ENCODE measurements at regions of chr5 and their contacts with region 1.

Region 1: DNA sequence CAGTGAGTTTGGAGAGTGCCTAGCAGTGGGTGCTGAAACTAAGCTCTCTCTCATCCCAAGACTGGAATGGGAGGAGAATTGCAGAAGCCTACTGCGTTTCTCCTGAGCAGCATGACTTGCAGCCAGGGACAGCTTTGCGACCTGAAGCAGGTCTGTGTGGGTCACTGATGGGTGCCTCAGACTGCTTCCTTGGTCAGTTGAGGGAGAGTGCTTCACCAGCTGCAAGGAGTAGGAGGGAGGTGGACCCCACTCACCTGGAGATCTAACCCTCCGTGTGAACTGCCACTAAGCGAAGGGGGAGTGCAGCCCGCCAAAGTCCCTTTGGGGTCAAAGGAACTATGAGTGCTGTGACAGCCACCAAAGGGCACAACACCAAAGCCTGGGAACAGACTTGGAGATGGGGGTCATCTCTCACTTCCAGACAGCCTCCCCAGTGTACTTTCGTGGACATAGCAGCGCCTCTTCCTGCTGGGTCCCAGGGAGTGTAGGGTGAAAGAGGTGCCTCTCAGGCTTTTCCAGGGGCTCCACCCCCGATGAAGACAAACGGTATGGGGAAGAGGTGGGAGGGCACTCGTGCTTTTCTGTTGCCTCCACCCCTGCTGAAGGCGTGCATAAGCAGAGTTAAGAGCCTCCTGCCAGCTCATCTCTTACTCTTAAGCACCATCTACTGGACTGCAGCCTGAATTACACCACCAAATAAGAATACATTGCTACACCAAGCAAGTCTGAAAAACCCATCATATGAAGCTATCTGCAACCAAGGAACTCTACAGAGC is 34.3 kb upstream of the MACIR start:
- DNase-seq: no peak
- H3K4me3 ChIP-seq: no peak overlapping the region
- H3K27ac ChIP-seq: no peak overlapping the region
- H3K4me1 ChIP-seq: no peaks in the 10 kb centered on the region
- H3K27me3 ChIP-seq: peaks cover 0 to 8% (median 0%) of the 10 kb centered on the region in 4 donors
- CTCF ChIP-seq: peak; percentile 25 to 74 (median 52)
- POLR2A ChIP-seq: no peak

Region 2: DNA sequence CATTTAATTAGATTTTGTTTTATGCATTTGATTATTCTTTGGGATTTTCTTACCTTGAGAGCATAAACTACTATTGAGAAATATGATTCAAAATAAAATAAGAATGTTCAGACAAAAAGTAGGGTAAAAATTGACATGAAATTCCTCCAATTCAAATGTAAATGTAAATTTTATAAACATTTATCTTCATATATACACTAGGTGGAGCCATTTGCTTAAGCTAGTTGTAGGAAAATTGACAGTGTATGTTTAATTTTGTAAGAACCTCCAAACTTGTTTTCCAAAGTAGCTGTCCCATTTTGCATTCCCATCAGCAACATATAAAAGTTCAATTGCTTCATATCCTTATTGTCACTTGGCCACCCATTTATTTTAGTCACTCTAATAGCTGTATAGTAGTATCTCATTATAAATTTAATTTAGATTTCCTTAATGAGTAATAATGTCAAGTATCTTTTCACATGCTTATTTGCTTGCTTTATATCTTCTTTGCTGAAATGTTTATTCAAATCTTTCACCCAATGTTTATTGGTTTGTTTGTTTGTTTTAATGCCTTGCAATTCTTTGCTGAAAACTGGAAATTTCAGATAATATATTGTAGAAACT is 687.9 kb before region 1 on chr5:
- intact Hi-C with region 1: loop called (anchors 10 kb)
- DNase-seq: no peak
- H3K4me3 ChIP-seq: no peak overlapping the region
- H3K27ac ChIP-seq: no peak overlapping the region
- H3K4me1 ChIP-seq: no peaks in the 10 kb centered on the region
- H3K27me3 ChIP-seq: no peaks in the 10 kb centered on the region
- CTCF ChIP-seq: peak in 3 of 6 experiments; percentile 11 to 34 (median 15)
- POLR2A ChIP-seq: no peak